Activated CD4-positive, alpha-beta T cell treated with anti-CD3 and anti-CD28 coated beads for 36 hours (primary cell): ENCODE measurements at regions of chr5 and their contacts with region 1.

Region 1: GRCh38 chr5:68433923-68434879 is 218.6 kb downstream of the PIK3R1 start:
- DNase-seq: peak; percentile 98
- ATAC-seq: peak; percentile 96
- H3K4me3 Mint-ChIP-seq: peak overlapping the region; percentile 37
- H3K27ac Mint-ChIP-seq: peak overlapping the region; percentile 84
- H3K4me1 Mint-ChIP-seq: peaks cover 57% of the 10 kb centered on the region
- H3K27me3 Mint-ChIP-seq: peaks cover 12% of the 10 kb centered on the region

Region 2: GRCh38 chr5:68215208-68215897 is 218.8 kb before region 1 on chr5 and contains the start of gene PIK3R1:
- CTCF ChIA-PET with region 1: no interaction called
- POLR2A ChIA-PET with region 1: no interaction called
- intact Hi-C with region 1: loop called in 1 of 2 experiments (anchors 1 kb)
- DNase-seq: peak; percentile 96
- ATAC-seq: peak; percentile 85
- H3K4me3 Mint-ChIP-seq: peak within 1 kb of the TSS; percentile 83
- H3K27ac Mint-ChIP-seq: peak within 1 kb of the TSS; percentile 97
- H3K4me1 Mint-ChIP-seq: peaks cover 45% of the 10 kb centered on the region
- H3K27me3 Mint-ChIP-seq: no peaks in the 10 kb centered on the region
- total RNA-seq, gene PIK3R1: 40.0 to 49.0 TPM

Region 3: DNA sequence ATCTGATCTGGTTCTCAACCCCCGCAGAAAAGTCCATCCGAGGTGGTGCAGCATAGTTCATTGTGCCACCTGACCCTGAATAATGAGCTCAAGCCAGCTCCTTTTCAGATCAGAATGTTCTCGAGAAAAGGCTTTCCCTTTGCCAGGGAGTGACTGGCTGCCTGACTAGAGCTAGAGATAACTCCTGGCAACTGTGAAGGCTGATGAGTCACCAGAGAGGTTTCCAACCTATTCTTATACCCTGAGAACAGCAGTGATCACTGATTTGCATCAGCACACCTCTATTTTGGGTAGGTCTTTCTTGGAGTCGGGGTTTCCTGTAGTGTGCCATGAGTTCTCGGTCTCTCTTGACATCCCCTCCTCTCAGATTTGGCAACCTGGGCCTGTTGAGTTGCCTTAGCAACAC is 90.8 kb before region 1 on chr5:
- CTCF ChIA-PET with region 1: no interaction called
- POLR2A ChIA-PET with region 1: no interaction called
- intact Hi-C with region 1: loop called (anchors 1 to 10 kb)
- DNase-seq: peak; percentile 56
- ATAC-seq: peak; percentile 88
- H3K4me3 Mint-ChIP-seq: no peak overlapping the region
- H3K27ac Mint-ChIP-seq: no peak overlapping the region
- H3K4me1 Mint-ChIP-seq: peaks cover 26% of the 10 kb centered on the region
- H3K27me3 Mint-ChIP-seq: no peaks in the 10 kb centered on the region

Region 4: GRCh38 chr5:68406767-68407241 is 27.4 kb before region 1 on chr5:
- CTCF ChIA-PET with region 1: no interaction called
- POLR2A ChIA-PET with region 1: interaction called, 9 read pairs
- intact Hi-C with region 1: loop called (anchors 1 kb)
- DNase-seq: no peak
- ATAC-seq: peak; percentile 28
- H3K4me3 Mint-ChIP-seq: no peak overlapping the region
- H3K27ac Mint-ChIP-seq: peak overlapping the region; percentile 55
- H3K4me1 Mint-ChIP-seq: peaks cover 26% of the 10 kb centered on the region
- H3K27me3 Mint-ChIP-seq: peaks cover 1% of the 10 kb centered on the region